Endothelial cell of umbilical vein (primary cell): ENCODE measurements at regions of chr6 and their contacts with region 1.

Region 1: DNA sequence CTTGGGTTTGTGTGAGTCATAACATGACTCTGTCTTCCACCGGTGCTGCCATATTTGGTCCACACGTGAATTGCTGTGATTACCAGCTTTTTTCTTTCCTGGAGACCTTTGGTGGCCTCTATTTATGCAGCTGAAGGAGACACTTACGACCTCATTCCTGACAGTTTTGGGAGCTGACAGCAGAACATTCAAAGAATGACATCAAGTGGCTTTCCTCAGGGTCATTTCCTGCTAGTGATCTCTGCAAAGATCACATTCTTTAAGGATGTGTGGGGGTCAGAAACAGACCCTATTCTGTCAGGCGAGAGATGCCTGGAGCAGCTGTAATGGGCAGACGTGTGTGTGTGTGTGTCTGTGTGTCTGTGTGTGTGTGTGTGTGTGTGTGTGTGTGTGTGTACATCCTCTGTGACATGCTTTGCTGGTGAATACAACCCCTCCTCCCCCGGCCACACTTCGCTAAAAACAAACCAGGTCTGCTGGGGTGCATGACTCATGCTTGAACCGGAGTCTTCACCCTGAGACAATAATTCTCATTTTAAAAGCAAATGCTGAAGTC is 115.6 kb downstream of the TMEM170B start:
- DNase-seq: peak; percentile 97
- H3K4me3 ChIP-seq: no peak overlapping the region
- H3K27ac ChIP-seq: peak overlapping the region; percentile 99
- H3K4me1 ChIP-seq: peaks cover 66% of the 10 kb centered on the region
- H3K27me3 ChIP-seq: no peaks in the 10 kb centered on the region
- CTCF ChIP-seq: no peak
- POLR2A ChIP-seq: peak; percentile 71

Region 2: GRCh38 chr6:11194356-11195218 is 458.5 kb before region 1 on chr6:
- CTCF ChIA-PET with region 1: no interaction called
- POLR2A ChIA-PET with region 1: no interaction called
- dilution Hi-C with region 1: no loop called
- intact Hi-C with region 1: loop called (anchors 1 kb)
- DNase-seq: peak; percentile 91
- H3K4me3 ChIP-seq: peak overlapping the region in 1 of 3 experiments; percentile 9
- H3K27ac ChIP-seq: peak overlapping the region; percentile 98
- H3K4me1 ChIP-seq: peaks cover 37% of the 10 kb centered on the region
- H3K27me3 ChIP-seq: no peaks in the 10 kb centered on the region
- CTCF ChIP-seq: peak in 1 of 2 donors; percentile 9
- POLR2A ChIP-seq: peak; percentile 38

Region 3: GRCh38 chr6:11538819-11539468 is 114.2 kb before region 1 on chr6:
- CTCF ChIA-PET with region 1: no interaction called
- POLR2A ChIA-PET with region 1: no interaction called
- dilution Hi-C with region 1: no loop called
- intact Hi-C with region 1: no loop called
- DNase-seq: no peak
- H3K4me3 ChIP-seq: peak overlapping the region; percentile 54 to 77 (median 71)
- H3K27ac ChIP-seq: no peak overlapping the region
- H3K4me1 ChIP-seq: peaks cover 25% of the 10 kb centered on the region
- H3K27me3 ChIP-seq: no peaks in the 10 kb centered on the region
- CTCF ChIP-seq: no peak
- POLR2A ChIP-seq: no peak

Region 4: GRCh38 chr6:11609315-11610071 is 43.6 kb before region 1 on chr6:
- CTCF ChIA-PET with region 1: interaction called, 102 read pairs
- POLR2A ChIA-PET with region 1: interaction called, 210 read pairs
- dilution Hi-C with region 1: loop called (anchors 10 kb)
- intact Hi-C with region 1: loop called (anchors 1 kb)
- DNase-seq: peak; percentile 99
- H3K4me3 ChIP-seq: peak overlapping the region in 2 of 3 experiments; percentile 30 to 86
- H3K27ac ChIP-seq: peak overlapping the region; percentile 99
- H3K4me1 ChIP-seq: peaks cover 78% of the 10 kb centered on the region
- H3K27me3 ChIP-seq: no peaks in the 10 kb centered on the region
- CTCF ChIP-seq: no peak
- POLR2A ChIP-seq: no peak

Region 5: DNA sequence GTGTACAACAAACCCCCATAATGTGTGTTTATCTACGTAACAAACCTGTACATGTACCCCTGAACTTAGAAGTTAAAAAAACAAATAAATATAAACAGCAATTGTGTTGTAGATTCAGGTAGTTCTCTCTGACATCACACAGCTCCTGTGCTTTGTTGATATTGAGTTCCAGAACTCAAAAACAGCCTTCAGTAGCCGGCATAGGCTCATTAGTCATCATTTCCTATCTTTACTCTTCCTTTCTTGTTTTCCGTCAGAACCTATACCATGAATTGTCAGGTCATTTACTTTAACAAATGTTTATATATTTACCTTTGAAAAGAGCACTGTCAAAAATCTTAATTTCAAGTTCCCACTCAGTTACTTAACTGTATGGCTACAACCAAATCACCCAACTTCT is 36.7 kb after region 1 on chr6:
- CTCF ChIA-PET with region 1: no interaction called
- POLR2A ChIA-PET with region 1: no interaction called
- dilution Hi-C with region 1: no loop called
- intact Hi-C with region 1: no loop called
- DNase-seq: peak; percentile 52
- H3K4me3 ChIP-seq: no peak overlapping the region
- H3K27ac ChIP-seq: no peak overlapping the region
- H3K4me1 ChIP-seq: peaks cover 9% of the 10 kb centered on the region
- H3K27me3 ChIP-seq: no peaks in the 10 kb centered on the region
- CTCF ChIP-seq: no peak
- POLR2A ChIP-seq: no peak

Region 6: DNA sequence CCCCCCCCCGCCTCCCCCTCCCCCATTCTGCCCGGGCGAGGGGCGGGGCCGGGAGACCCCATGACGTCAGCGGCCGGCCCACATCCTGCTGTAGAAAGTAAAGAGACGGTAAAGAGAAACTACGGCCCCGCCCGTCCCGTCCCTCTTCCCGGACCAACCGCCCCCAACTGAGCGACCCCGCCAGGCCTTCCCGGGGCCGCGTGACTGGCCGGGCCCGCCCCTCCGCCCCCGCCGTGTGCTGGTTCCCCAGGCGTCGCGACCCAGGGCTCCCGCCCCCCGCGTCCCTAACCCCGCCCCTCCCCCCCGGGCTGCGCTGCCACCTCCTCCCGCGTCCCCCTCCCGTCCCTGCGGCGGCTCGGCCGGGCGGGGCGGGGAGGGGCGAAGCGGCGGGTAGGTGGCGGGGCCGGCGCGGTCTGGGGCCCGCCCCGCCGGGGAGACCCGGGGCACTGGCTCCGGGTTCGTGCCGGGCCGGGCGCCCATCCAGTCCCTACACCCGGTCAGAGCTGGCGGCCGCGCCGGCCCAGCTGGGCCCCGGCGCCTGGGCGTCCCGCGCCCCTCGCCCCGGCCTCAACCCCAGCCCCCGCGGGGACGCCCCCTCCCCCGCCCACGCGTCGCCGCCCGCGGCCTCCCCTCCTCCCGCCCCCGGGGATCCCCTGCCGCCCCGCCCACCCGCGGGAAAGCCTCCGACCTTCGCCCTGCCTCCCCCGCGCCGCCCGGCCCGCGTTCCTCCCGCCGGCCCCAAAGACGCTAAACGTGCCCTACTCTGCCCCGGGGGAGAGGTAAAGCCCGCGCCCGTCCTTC is 358.4 kb after region 1 on chr6:
- CTCF ChIA-PET with region 1: interaction called, 41 read pairs
- POLR2A ChIA-PET with region 1: interaction called, 8 read pairs
- dilution Hi-C with region 1: no loop called
- intact Hi-C with region 1: loop called (anchors 1 kb)
- DNase-seq: peak; percentile 96
- H3K4me3 ChIP-seq: peak overlapping the region in 1 of 3 experiments; percentile 71
- H3K27ac ChIP-seq: peak overlapping the region; percentile 98
- H3K4me1 ChIP-seq: peaks cover 38% of the 10 kb centered on the region
- H3K27me3 ChIP-seq: no peaks in the 10 kb centered on the region
- CTCF ChIP-seq: no peak
- POLR2A ChIP-seq: peak; percentile 7

Region 7: GRCh38 chr6:12233693-12234571 is 580.8 kb after region 1 on chr6:
- CTCF ChIA-PET with region 1: interaction called, 120 read pairs
- POLR2A ChIA-PET with region 1: interaction called, 3 read pairs
- dilution Hi-C with region 1: no loop called
- intact Hi-C with region 1: loop called (anchors 1 kb)
- DNase-seq: peak; percentile 86
- H3K4me3 ChIP-seq: no peak overlapping the region
- H3K27ac ChIP-seq: no peak overlapping the region
- H3K4me1 ChIP-seq: no peaks in the 10 kb centered on the region
- H3K27me3 ChIP-seq: no peaks in the 10 kb centered on the region
- CTCF ChIP-seq: peak; percentile 59 to 73
- POLR2A ChIP-seq: no peak

Region 8: DNA sequence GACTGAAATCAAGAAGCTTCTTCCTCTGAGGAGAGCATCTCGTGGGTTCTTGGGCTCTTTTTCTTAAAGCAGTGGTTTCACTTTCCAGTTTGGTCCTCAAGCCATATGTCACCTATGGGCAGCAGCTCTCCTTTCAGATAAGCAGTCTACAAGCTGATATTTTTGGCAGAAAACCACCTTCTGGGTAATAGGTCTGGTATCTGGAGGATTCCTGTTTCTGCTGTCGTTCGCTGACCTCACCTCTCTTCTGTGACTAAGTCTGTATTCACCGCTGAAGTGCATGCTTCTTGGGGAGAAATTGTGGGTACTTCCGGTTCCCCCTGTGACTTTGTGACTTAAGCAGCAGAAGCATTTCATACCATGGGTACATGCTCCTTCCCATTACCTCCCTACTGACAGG is 830.6 kb after region 1 on chr6:
- CTCF ChIA-PET with region 1: interaction called, 5 read pairs
- POLR2A ChIA-PET with region 1: no interaction called
- dilution Hi-C with region 1: no loop called
- intact Hi-C with region 1: loop called (anchors 1 kb)
- DNase-seq: peak; percentile 90
- H3K4me3 ChIP-seq: peak overlapping the region in 1 of 3 experiments; percentile 9
- H3K27ac ChIP-seq: peak overlapping the region; percentile 74
- H3K4me1 ChIP-seq: peaks cover 54% of the 10 kb centered on the region
- H3K27me3 ChIP-seq: no peaks in the 10 kb centered on the region
- CTCF ChIP-seq: no peak
- POLR2A ChIP-seq: peak; percentile 56

Region 9: GRCh38 chr6:12585497-12586041 is 932.5 kb after region 1 on chr6:
- CTCF ChIA-PET with region 1: no interaction called
- POLR2A ChIA-PET with region 1: interaction called, 3 read pairs
- dilution Hi-C with region 1: no loop called
- intact Hi-C with region 1: loop called (anchors 1 kb)
- DNase-seq: peak; percentile 96
- H3K4me3 ChIP-seq: peak overlapping the region in 1 of 3 experiments; percentile 25
- H3K27ac ChIP-seq: peak overlapping the region; percentile 100
- H3K4me1 ChIP-seq: peaks cover 51% of the 10 kb centered on the region
- H3K27me3 ChIP-seq: no peaks in the 10 kb centered on the region
- CTCF ChIP-seq: no peak
- POLR2A ChIP-seq: peak; percentile 49